ENCODE measurements at regions of chr12 and their contacts with region 1.

Region 1: GRCh38 chr12:51424662-51425438 is at the start of gene SLC4A8:
- DNase-seq: peak; percentile 77 to 84
- ATAC-seq: peak; percentile 90 to 94 (median 92)
- H3K4me3 ChIP-seq: peak within 1 kb of the TSS; percentile 58
- H3K4me3 Mint-ChIP-seq: peak within 1 kb of the TSS; percentile 88
- H3K27ac ChIP-seq: peak within 1 kb of the TSS; percentile 14
- H3K27ac Mint-ChIP-seq: peak within 1 kb of the TSS; percentile 68 to 76
- H3K4me1 ChIP-seq: peaks cover 10% of the 10 kb centered on the region
- H3K4me1 Mint-ChIP-seq: peaks cover 10 to 21% of the 10 kb centered on the region in 2 donors
- H3K27me3 ChIP-seq: no peaks in the 10 kb centered on the region
- H3K27me3 Mint-ChIP-seq: no peaks in the 10 kb centered on the region
- CTCF ChIP-seq: peak; percentile 83
- total RNA-seq, gene SLC4A8: 9.8 to 19.2 (median 13.6) TPM

Region 2: GRCh38 chr12:51368640-51369517 is 56.0 kb before region 1 on chr12:
- intact Hi-C with region 1: loop called (anchors 2 kb)
- DNase-seq: peak; percentile 77 to 97
- ATAC-seq: peak; percentile 91 to 95 (median 91)
- H3K4me3 ChIP-seq: no peak overlapping the region
- H3K4me3 Mint-ChIP-seq: peak overlapping the region; percentile 80
- H3K27ac ChIP-seq: peak overlapping the region; percentile 72
- H3K27ac Mint-ChIP-seq: peak overlapping the region; percentile 82 to 87
- H3K4me1 ChIP-seq: peaks cover 30% of the 10 kb centered on the region
- H3K4me1 Mint-ChIP-seq: peaks cover 31 to 33% of the 10 kb centered on the region in 2 donors
- H3K27me3 ChIP-seq: no peaks in the 10 kb centered on the region
- H3K27me3 Mint-ChIP-seq: no peaks in the 10 kb centered on the region
- CTCF ChIP-seq: no peak

Region 3: GRCh38 chr12:51531978-51532497 is 107.2 kb after region 1 on chr12:
- intact Hi-C with region 1: loop called (anchors 1 kb)
- DNase-seq: peak; percentile 60 to 84
- ATAC-seq: peak; percentile 88 to 99 (median 99)
- H3K4me3 ChIP-seq: no peak overlapping the region
- H3K4me3 Mint-ChIP-seq: no peak overlapping the region
- H3K27ac ChIP-seq: no peak overlapping the region
- H3K27ac Mint-ChIP-seq: no peak overlapping the region
- H3K4me1 ChIP-seq: peaks cover 4% of the 10 kb centered on the region
- H3K4me1 Mint-ChIP-seq: peaks cover 0 to 9% of the 10 kb centered on the region in 2 donors
- H3K27me3 ChIP-seq: no peaks in the 10 kb centered on the region
- H3K27me3 Mint-ChIP-seq: peaks cover 15 to 35% of the 10 kb centered on the region in 2 donors
- CTCF ChIP-seq: peak; percentile 92

Region 4: GRCh38 chr12:51631591-51631990 is 206.7 kb after region 1 on chr12:
- intact Hi-C with region 1: no loop called
- DNase-seq: no peak
- ATAC-seq: no peak
- H3K4me3 ChIP-seq: no peak overlapping the region
- H3K4me3 Mint-ChIP-seq: no peak overlapping the region
- H3K27ac ChIP-seq: no peak overlapping the region
- H3K27ac Mint-ChIP-seq: no peak overlapping the region
- H3K4me1 ChIP-seq: no peaks in the 10 kb centered on the region
- H3K4me1 Mint-ChIP-seq: no peaks in the 10 kb centered on the region
- H3K27me3 ChIP-seq: peaks cover 4% of the 10 kb centered on the region
- H3K27me3 Mint-ChIP-seq: peaks cover 11 to 25% of the 10 kb centered on the region in 2 donors
- CTCF ChIP-seq: no peak

Region 5: GRCh38 chr12:51814311-51815088 is 389.6 kb after region 1 on chr12:
- intact Hi-C with region 1: loop called (anchors 5 kb)
- DNase-seq: peak; percentile 71 to 86
- ATAC-seq: peak; percentile 89 to 97 (median 96)
- H3K4me3 ChIP-seq: peak overlapping the region; percentile 32
- H3K4me3 Mint-ChIP-seq: peak overlapping the region; percentile 90
- H3K27ac ChIP-seq: peak overlapping the region; percentile 37
- H3K27ac Mint-ChIP-seq: peak overlapping the region in 1 of 2 donors; percentile 57
- H3K4me1 ChIP-seq: peaks cover 20% of the 10 kb centered on the region
- H3K4me1 Mint-ChIP-seq: peaks cover 10 to 13% of the 10 kb centered on the region in 2 donors
- H3K27me3 ChIP-seq: no peaks in the 10 kb centered on the region
- H3K27me3 Mint-ChIP-seq: no peaks in the 10 kb centered on the region
- CTCF ChIP-seq: peak; percentile 60

Region 6: GRCh38 chr12:51879102-51879501 is 454.3 kb after region 1 on chr12:
- intact Hi-C with region 1: loop called (anchors 5 kb)
- DNase-seq: no peak
- ATAC-seq: no peak
- H3K4me3 ChIP-seq: no peak overlapping the region
- H3K4me3 Mint-ChIP-seq: no peak overlapping the region
- H3K27ac ChIP-seq: no peak overlapping the region
- H3K27ac Mint-ChIP-seq: no peak overlapping the region
- H3K4me1 ChIP-seq: no peaks in the 10 kb centered on the region
- H3K4me1 Mint-ChIP-seq: no peaks in the 10 kb centered on the region
- H3K27me3 ChIP-seq: no peaks in the 10 kb centered on the region
- H3K27me3 Mint-ChIP-seq: peaks cover 0 to 6% of the 10 kb centered on the region in 2 donors
- CTCF ChIP-seq: no peak